Heart left ventricle (tissue), 16 donors: ENCODE measurements at regions of chr11 and their contacts with region 1.

Region 1: DNA sequence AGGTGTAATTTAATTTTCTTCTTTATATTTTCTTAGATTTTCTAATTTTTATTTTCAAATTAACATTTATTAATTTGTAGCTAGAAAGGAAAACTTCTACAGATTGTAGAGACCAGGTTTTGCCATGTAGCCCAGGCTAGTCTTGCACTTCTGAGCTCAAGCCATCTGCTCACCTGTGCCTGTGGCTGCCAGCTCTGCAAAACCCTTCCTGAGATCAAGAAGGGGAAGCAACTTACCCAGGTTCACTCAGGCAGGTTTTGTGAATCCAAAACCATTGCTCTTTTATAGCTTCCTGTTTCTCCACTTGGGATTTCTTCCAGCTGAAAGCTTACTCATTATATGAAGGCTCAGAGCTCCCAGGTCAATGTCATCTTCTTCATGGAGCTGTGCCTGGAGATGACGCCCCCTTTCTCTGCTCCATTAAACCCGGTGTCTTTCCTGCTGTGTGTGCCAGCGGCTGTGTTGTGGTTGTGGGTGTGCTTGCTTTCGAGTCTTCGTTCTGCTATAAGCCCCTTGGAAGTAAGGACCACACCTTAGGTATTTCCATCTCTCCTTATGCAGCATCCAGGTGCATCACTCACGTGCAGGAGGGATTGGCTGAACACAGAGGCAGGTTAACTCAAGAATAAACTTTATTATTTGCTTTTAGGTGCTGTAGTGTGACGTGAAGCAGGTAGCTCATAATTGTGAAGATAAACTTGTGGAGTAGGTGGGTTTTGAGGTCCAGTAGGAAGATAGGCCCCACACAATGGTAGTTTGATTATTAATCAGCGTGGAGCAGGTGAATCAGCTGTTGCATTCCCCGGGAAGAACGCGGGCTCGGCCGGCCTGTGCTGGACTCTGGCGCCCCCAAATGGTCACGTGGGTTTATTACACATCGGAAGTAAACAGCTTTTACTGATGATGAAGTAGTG is 42.2 kb upstream of the INCENP start:
- DNase-seq: peak; percentile 72 to 88 (median 81)
- ATAC-seq: peak; percentile 61 to 89 (median 83)
- H3K4me3 ChIP-seq: peak overlapping the region in 1 of 12 donors; percentile 18
- H3K27ac ChIP-seq: no peak overlapping the region
- H3K4me1 ChIP-seq: peaks cover 0 to 11% (median 0%) of the 10 kb centered on the region in 12 donors
- H3K27me3 ChIP-seq: no peaks in the 10 kb centered on the region
- CTCF ChIP-seq: peak; percentile 82 to 97 (median 93)
- POLR2A ChIP-seq: no peak

Region 2: GRCh38 chr11:61871158-61871597 is 210.5 kb before region 1 on chr11:
- intact Hi-C with region 1: loop called in 4 of 10 experiments (anchors 1 to 5 kb)
- DNase-seq: peak; percentile 80 to 92 (median 88)
- ATAC-seq: peak; percentile 79 to 90 (median 84)
- H3K4me3 ChIP-seq: peak overlapping the region in 7 of 12 donors; percentile 11 to 41 (median 20)
- H3K27ac ChIP-seq: peak overlapping the region in 9 of 12 donors; percentile 1 to 82 (median 56)
- H3K4me1 ChIP-seq: peaks cover 2 to 48% (median 20%) of the 10 kb centered on the region in 12 donors
- H3K27me3 ChIP-seq: no peaks in the 10 kb centered on the region
- CTCF ChIP-seq: peak; percentile 88 to 98 (median 94)
- POLR2A ChIP-seq: peak in 1 of 2 donors; percentile 13

Region 3: DNA sequence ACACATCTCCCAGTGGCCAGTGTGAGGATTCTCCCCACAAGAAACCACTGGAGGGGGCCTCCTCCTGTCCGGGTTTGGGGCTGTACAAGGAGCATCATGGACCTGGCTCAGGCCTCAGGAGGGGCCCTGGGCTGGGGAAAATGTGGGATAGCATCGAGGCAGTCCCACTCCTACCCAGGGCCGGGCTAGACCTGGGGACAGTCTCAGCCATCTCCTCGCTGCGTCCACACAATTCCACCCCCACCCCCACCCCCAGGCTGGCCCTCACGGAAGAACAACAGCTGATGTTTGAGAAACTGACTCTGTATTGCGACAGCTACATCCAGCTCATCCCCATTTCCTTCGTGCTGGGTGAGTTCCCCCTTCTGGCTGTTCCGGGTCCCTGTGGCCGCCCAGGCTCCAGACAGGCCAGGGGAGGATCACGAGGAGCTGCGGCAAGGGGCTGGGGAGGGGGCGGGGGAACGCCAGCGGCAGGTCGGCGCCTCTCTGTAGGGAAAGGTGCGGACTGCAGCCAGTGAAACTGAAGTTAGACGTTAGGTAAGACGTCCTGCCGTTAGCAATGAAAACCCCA is 126.7 kb before region 1 on chr11:
- intact Hi-C with region 1: loop called in 2 of 10 experiments (anchors 5 kb)
- DNase-seq: peak; percentile 70 to 84 (median 77)
- ATAC-seq: peak; percentile 64 to 86 (median 84)
- H3K4me3 ChIP-seq: peak overlapping the region; percentile 6 to 68 (median 50)
- H3K27ac ChIP-seq: peak overlapping the region; percentile 24 to 94 (median 72)
- H3K4me1 ChIP-seq: peaks cover 0 to 27% (median 13%) of the 10 kb centered on the region in 12 donors
- H3K27me3 ChIP-seq: peaks cover 0 to 4% (median 0%) of the 10 kb centered on the region in 9 donors
- CTCF ChIP-seq: peak in 5 of 12 donors; percentile 18 to 39 (median 30)
- POLR2A ChIP-seq: no peak